Brain microvascular endothelial cell (primary cell): ENCODE measurements at regions of chr19 and their contacts with region 1.

Region 1: GRCh38 chr19:2328401-2329148 is at the starts of genes LSM7 and SPPL2B:
- DNase-seq: peak; percentile 66
- H3K4me3 ChIP-seq: peak within 1 kb of the TSS; percentile 92
- H3K27ac ChIP-seq: peak within 1 kb of the TSS; percentile 63
- H3K27me3 ChIP-seq: no peaks in the 10 kb centered on the region
- CTCF ChIP-seq: no peak

Region 2: GRCh38 chr19:2207991-2208860 is 120.3 kb before region 1 on chr19:
- in situ Hi-C with region 1: no loop called
- DNase-seq: peak; percentile 78
- H3K4me3 ChIP-seq: no peak overlapping the region
- H3K27ac ChIP-seq: peak overlapping the region; percentile 22
- H3K27me3 ChIP-seq: no peaks in the 10 kb centered on the region
- CTCF ChIP-seq: peak; percentile 54

Region 3: DNA sequence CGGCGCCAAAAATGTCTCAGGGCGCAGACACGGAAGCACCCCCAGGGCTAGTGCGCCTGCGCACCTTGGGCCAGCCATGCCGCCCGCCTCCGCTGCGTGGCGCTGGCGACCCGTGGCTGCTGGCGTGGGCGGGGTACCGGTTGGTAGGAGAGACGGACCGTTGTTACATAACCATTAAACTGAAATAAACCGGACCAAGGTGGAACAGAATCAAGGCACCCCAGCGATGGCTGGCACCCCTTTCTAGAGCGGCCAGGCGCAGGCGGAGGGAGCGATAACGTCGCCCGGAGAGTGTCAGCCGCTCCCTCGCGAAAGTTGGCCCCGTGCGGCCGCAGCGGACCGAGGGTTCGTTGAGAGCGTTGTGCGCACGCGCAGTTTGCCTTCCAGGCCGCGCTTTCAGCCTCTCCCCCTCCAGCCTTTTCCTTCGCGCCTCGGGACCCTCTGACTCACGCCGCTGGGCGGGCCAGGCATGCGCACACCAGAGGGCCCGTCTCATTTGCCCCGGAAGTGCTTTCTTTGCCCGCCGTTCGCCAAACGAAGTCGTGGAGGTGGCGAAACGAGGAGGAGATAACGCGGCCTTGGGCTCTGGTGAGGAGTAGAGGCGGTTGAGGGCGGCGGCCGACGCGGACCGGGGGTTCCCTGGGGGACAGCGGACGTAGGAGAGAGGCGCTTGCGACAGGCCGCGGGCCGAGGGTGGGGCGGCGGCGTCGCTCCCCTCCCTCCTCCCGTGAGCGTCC is 92.1 kb before region 1 on chr19 and contains the starts of genes PLEKHJ1 and SF3A2:
- in situ Hi-C with region 1: loop called (anchors 5 kb)
- DNase-seq: peak; percentile 94
- H3K4me3 ChIP-seq: peak within 1 kb of the TSS; percentile 81
- H3K27ac ChIP-seq: peak within 1 kb of the TSS; percentile 91
- H3K27me3 ChIP-seq: no peaks in the 10 kb centered on the region
- CTCF ChIP-seq: peak; percentile 77